ENCODE measurements at regions of chr7 and their contacts with region 1.

Region 1: DNA sequence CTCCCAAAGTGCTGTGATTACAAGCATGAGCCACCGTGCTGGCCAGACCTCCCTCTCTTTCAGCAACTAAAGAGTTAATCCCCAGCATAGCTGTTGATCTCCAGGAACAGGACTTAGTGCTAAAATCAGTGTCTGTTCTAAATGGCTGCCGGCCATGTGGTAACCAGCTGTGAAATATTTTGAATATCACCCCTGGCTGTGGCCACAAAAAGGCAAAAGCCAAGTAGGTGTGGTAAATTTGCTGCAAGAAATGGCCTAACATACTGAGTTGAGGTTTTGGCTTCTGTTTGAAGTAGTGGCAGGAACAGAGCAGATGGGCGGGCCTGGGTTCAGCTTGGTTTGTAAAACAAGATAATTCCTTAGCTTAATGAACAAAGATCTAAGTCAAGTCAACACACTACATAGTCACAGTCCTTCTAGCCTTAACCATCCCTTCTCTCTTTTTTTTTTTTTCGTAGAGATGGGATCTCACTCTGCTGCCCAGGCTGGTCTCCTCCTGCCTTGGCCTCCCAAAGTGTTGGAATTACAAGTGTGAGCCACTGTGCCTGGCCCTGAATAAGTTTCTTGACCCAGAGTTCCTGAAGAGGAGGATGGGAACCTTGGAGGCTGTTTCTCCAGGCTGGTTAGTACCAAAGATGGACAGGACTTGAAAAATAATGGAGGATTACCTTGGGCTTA is 22.7 kb upstream of the AGFG2 start:
- DNase-seq: peak; percentile 30 to 84 (median 62)
- H3K4me3 ChIP-seq: peak overlapping the region; percentile 34
- H3K4me3 Mint-ChIP-seq: peak overlapping the region in 6 of 7 donors; percentile 57 to 87 (median 62)
- H3K27ac ChIP-seq: peak overlapping the region; percentile 10
- H3K27ac Mint-ChIP-seq: peak overlapping the region; percentile 0 to 87 (median 32)
- H3K4me1 ChIP-seq: peaks cover 36% of the 10 kb centered on the region
- H3K4me1 Mint-ChIP-seq: peaks cover 27 to 35% (median 29%) of the 10 kb centered on the region in 3 donors
- H3K27me3 ChIP-seq: no peaks in the 10 kb centered on the region
- H3K27me3 Mint-ChIP-seq: no peaks in the 10 kb centered on the region

Region 2: GRCh38 chr7:100538654-100539435 is 22.6 kb after region 1 on chr7 and contains the start of gene AGFG2:
- CTCF ChIA-PET with region 1: interaction called, 5 read pairs
- POLR2A ChIA-PET with region 1: interaction called, 12 read pairs
- DNase-seq: peak; percentile 100
- H3K4me3 ChIP-seq: peak within 1 kb of the TSS; percentile 79
- H3K4me3 Mint-ChIP-seq: peak within 1 kb of the TSS; percentile 95 to 99 (median 96)
- H3K27ac ChIP-seq: peak within 1 kb of the TSS; percentile 64
- H3K27ac Mint-ChIP-seq: peak within 1 kb of the TSS; percentile 87 to 98 (median 92)
- H3K4me1 ChIP-seq: peaks cover 45% of the 10 kb centered on the region
- H3K4me1 Mint-ChIP-seq: peaks cover 47 to 52% (median 50%) of the 10 kb centered on the region in 3 donors
- H3K27me3 ChIP-seq: no peaks in the 10 kb centered on the region
- H3K27me3 Mint-ChIP-seq: peaks cover 0 to 1% of the 10 kb centered on the region in 2 donors
- total RNA-seq, gene AGFG2: 60.5 to 63.1 TPM

Measured in CD8-positive, alpha-beta memory T cell (primary cell).